Ascending aorta (tissue), 2 donors: ENCODE measurements at regions of chrX and their contacts with region 1.

Region 1: DNA sequence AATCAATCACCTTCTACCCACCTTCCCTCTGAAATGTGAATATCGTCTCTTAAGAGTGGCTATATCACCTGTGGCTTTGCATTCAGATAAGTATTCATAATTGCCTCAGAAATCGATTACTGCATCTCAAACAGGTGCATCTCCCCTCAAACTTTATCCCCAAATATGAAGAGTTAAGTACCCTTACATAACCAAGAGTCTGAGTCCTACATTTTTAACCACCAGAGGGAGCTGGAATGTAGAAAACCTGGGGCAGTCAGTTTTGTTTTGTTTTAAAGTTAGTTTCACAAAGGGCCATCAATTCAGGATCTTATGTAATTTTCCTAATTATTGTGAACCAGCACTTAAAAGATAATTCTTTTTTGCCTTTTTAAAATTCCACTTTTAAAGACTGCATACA is 5.7 kb downstream of the TCEANC start:
- DNase-seq: no peak
- H3K4me3 ChIP-seq: peak overlapping the region in 1 of 2 donors; percentile 23
- H3K27ac ChIP-seq: peak overlapping the region in 1 of 2 donors; percentile 50
- H3K4me1 ChIP-seq: peaks cover 0 to 3% of the 10 kb centered on the region in 2 donors
- H3K27me3 ChIP-seq: no peaks in the 10 kb centered on the region
- CTCF ChIP-seq: peak; percentile 64 to 84 (median 74)

Region 2: GRCh38 chrX:13681595-13681994 is 23.0 kb after region 1 on chrX:
- intact Hi-C with region 1: no loop called
- DNase-seq: no peak
- H3K4me3 ChIP-seq: no peak overlapping the region
- H3K27ac ChIP-seq: no peak overlapping the region
- H3K4me1 ChIP-seq: no peaks in the 10 kb centered on the region
- H3K27me3 ChIP-seq: no peaks in the 10 kb centered on the region
- CTCF ChIP-seq: no peak

Region 3: GRCh38 chrX:13891377-13892140 is 233.0 kb after region 1 on chrX:
- intact Hi-C with region 1: loop called (anchors 5 kb)
- DNase-seq: no peak
- H3K4me3 ChIP-seq: no peak overlapping the region
- H3K27ac ChIP-seq: no peak overlapping the region
- H3K4me1 ChIP-seq: peaks cover 0 to 15% of the 10 kb centered on the region in 2 donors
- H3K27me3 ChIP-seq: no peaks in the 10 kb centered on the region
- CTCF ChIP-seq: no peak